ENCODE measurements at regions of chr15 and their contacts with region 1.

Region 1: GRCh38 chr15:101014921-101015841 is 96.0 kb downstream of the LRRK1 start:
- DNase-seq: peak; percentile 91
- ATAC-seq: peak; percentile 83

Region 2: DNA sequence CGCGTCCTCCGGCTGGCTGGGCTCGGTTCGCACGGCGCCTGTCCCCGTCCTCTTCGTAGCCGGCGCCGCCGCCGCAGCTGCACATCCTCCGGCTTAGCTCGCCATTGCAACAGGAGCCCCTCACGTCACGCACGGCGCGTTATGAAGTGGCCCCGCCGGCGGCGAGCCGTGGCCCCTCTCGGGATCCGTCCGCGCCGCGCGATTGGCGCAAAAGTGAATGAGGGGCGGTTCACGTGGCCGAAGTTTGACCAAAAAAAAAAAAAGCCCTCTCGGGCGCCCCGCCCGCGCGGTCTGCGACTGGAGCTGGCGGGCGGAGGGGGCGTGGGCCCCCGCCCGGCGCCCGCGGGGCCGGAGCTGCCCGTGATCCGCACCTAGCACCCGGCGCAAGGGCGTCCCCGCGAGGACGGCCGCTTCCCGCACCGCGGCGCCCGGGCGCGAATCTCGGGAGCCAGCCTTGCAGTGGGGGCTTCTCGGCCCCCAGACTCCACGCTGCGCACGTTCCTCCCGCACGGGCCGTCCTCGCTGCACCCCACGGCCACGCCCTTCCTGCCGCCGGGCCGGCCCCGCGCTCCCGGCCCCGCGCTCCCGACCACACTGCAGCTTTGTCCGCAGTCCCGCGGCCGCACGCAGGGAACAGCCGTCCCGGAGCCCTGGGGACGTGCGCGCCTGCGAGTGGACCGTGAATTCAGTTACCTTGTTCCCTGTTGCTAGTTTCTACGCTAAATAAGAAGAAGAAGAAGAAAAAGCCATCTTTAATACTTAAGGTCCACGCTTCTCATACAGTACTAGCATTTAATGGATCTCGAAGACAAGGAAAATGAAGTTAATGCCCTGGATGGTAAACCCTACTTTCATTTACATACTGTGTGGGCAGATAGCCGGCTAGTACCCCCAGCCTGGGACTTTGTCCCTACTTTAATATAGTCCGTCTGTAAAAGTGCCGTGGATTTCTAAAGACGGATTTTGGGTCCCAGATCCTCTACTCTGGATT is 236.9 kb after region 1 on chr15 and contains the start of gene CHSY1:
- intact Hi-C with region 1: loop called (anchors 5 kb)
- DNase-seq: peak; percentile 96
- ATAC-seq: peak; percentile 91
- total RNA-seq, gene CHSY1: 53.2 TPM

Region 3: DNA sequence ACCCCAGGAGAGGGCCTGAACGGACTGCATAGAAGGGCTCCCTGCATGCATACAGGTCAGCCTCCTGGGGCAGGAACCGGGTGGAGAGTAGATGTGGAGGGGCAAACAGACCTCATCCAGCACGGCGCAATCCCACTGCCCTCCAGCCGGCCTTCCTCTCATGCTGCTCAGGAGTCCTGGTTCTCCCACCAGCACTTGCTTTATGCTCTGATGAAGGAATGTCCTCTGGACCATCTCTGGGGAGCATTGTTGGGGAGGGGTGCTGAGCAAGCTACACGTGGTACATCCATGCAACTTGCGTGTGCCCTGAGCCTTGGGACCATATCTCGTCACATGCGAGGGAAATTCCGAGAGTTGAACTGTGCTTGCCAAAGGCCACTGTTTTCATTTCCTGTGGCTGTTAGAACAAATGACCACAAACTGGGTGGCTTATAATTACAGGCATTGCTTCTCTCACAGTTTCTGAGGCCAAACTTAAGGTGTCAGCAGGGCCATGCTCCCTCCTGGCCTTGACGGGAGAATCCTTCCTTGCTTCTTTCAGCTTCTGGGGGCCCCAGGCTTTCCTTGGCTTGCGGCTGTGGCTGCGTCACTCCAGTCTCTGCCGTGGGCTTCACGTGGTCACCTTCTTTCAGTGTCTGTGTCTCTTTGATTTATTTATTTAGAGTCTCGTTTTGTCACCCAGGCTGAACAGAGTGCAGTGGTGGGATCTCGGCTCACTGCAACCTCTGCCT is 249.9 kb after region 1 on chr15:
- intact Hi-C with region 1: loop called (anchors 5 kb)
- DNase-seq: peak; percentile 62
- ATAC-seq: peak; percentile 70

Measured in sciatic nerve (tissue), 2 donors.